ENCODE measurements at regions of chr1 and their contacts with region 1.

Region 1: DNA sequence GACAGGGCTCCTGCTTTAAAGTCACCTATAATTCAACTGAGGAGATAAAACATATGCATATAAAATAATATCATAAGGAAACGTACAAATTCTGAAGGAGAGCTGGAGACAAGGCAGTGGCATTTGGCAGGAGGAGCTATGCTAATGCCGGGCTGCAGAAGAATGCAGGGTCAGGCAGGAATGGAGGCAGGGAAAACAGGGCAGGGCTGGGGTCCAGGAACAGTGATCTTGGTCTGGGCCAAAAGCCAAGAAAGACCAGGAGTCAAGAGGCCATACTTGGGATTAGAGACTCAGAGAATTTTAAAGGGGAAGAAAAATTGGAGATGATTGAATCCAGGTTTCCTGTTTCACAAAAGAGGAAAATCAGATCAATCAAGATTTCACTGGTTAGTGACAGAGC is 20.0 kb upstream of the BRDT start:
- DNase-seq: no peak
- H3K4me3 ChIP-seq: no peak overlapping the region
- H3K27ac ChIP-seq: no peak overlapping the region
- H3K4me1 ChIP-seq: peaks cover 0 to 6% (median 4%) of the 10 kb centered on the region in 3 donors
- H3K27me3 ChIP-seq: no peaks in the 10 kb centered on the region
- CTCF ChIP-seq: no peak
- POLR2A ChIP-seq: no peak

Region 2: DNA sequence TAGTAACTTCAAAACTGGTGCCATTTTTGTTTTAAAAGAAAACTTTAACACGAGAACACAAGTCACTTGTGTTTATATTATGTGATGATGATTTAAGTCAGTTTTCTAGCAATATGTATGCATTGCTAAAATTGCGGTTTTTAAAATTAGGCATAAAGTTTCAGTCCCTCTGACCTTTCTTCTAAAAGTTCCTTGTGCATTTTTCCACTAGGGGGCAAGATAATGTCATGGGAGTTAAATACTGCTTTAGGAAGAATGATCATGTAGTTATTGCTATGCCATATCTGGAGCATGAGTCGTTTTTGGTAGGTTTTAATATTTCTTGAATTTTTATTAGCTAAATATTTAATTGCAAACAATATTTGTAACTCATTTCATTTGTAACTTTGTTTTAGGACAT is 417.9 kb before region 1 on chr1:
- intact Hi-C with region 1: loop called (anchors 5 kb)
- DNase-seq: no peak
- H3K4me3 ChIP-seq: no peak overlapping the region
- H3K27ac ChIP-seq: no peak overlapping the region
- H3K4me1 ChIP-seq: peaks cover 0 to 4% (median 0%) of the 10 kb centered on the region in 3 donors
- H3K27me3 ChIP-seq: no peaks in the 10 kb centered on the region
- CTCF ChIP-seq: peak in 5 of 6 experiments; percentile 47 to 71 (median 63)
- POLR2A ChIP-seq: no peak

Region 3: DNA sequence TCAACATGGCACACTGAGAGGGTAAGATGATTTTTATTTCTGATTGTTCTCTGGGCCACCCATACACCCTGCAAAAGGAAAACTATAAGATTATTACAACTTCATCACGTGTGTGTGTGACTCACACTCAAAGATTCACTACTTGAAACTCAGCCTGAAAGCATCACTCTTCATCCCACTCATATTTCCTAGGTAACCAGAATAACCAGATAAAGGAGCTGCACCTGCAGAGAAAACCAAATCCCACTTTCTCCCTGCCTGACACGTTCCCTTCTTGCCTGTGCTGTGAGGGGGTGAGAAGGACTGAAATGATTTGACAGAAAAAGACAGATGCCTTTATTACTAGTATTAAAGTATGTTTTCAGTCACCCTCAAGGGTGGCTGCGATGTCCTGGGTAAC is 174.9 kb before region 1 on chr1:
- intact Hi-C with region 1: no loop called
- DNase-seq: no peak
- H3K4me3 ChIP-seq: no peak overlapping the region
- H3K27ac ChIP-seq: peak overlapping the region in 3 of 4 donors; percentile 78 to 84 (median 80)
- H3K4me1 ChIP-seq: peaks cover 0 to 79% (median 37%) of the 10 kb centered on the region in 3 donors
- H3K27me3 ChIP-seq: no peaks in the 10 kb centered on the region
- CTCF ChIP-seq: no peak
- POLR2A ChIP-seq: no peak

Region 4: DNA sequence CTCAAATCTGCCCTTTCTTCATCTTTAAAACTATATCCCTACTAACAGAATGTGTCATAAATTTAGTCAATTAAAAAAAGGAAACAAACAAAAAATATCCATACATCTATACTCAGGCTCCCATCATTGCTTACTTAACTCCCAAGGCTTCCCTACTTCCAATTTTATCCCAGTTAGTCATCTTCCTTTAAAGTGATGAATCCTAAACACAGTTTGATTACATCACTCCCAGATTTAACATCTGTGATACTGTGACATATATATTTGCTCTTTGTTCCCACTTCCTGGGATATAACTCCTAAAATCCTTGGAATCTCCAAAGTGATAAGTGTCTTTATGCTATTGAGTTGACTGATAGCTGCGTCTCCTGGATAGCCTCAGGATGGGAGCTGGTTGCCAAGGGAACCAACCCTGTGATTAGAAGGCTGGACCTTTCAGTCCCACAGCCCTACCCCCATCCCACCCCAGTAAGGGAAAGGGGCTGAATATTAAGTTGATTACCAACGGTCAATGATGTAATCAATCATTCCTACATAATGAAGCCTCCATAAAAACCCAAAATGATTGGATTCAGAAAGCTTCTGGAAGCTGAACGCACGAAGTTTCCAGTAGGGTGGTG is 348.0 kb after region 1 on chr1:
- intact Hi-C with region 1: no loop called
- DNase-seq: no peak
- H3K4me3 ChIP-seq: no peak overlapping the region
- H3K27ac ChIP-seq: no peak overlapping the region
- H3K4me1 ChIP-seq: no peaks in the 10 kb centered on the region
- H3K27me3 ChIP-seq: no peaks in the 10 kb centered on the region
- CTCF ChIP-seq: no peak
- POLR2A ChIP-seq: no peak